ENCODE measurements at regions of chr17 and their contacts with region 1.

Region 1: GRCh38 chr17:31508288-31509094 is 117.0 kb downstream of the RAB11FIP4 start:
- DNase-seq: peak in 3 of 4 experiments; percentile 30 to 86 (median 69)
- ATAC-seq: peak; percentile 89
- H3K4me3 ChIP-seq: no peak overlapping the region
- H3K27ac ChIP-seq: peak overlapping the region; percentile 71
- H3K4me1 ChIP-seq: peaks cover 27 to 34% of the 10 kb centered on the region in 2 experiments
- H3K27me3 ChIP-seq: no peaks in the 10 kb centered on the region
- CTCF ChIP-seq: peak; percentile 52 to 65 (median 58)
- EP300 ChIP-seq: peak; percentile 33; the same call in 1 of the 2 replicates
- POLR2A ChIP-seq: no peak
- RAD21 ChIP-seq: peak in 1 of 2 experiments; percentile 48; a peak in 2 of 4 replicates

Region 2: GRCh38 chr17:30869005-30869404 is 639.5 kb before region 1 on chr17:
- CTCF ChIA-PET with region 1: no interaction called
- POLR2A ChIA-PET with region 1: no interaction called
- in situ Hi-C with region 1: no loop called
- intact Hi-C with region 1: no loop called
- DNase-seq: no peak
- ATAC-seq: no peak
- H3K4me3 ChIP-seq: no peak overlapping the region
- H3K27ac ChIP-seq: no peak overlapping the region
- H3K4me1 ChIP-seq: no peaks in the 10 kb centered on the region
- H3K27me3 ChIP-seq: no peaks in the 10 kb centered on the region
- CTCF ChIP-seq: no peak
- EP300 ChIP-seq: no peak
- POLR2A ChIP-seq: no peak
- RAD21 ChIP-seq: no peak

Region 3: DNA sequence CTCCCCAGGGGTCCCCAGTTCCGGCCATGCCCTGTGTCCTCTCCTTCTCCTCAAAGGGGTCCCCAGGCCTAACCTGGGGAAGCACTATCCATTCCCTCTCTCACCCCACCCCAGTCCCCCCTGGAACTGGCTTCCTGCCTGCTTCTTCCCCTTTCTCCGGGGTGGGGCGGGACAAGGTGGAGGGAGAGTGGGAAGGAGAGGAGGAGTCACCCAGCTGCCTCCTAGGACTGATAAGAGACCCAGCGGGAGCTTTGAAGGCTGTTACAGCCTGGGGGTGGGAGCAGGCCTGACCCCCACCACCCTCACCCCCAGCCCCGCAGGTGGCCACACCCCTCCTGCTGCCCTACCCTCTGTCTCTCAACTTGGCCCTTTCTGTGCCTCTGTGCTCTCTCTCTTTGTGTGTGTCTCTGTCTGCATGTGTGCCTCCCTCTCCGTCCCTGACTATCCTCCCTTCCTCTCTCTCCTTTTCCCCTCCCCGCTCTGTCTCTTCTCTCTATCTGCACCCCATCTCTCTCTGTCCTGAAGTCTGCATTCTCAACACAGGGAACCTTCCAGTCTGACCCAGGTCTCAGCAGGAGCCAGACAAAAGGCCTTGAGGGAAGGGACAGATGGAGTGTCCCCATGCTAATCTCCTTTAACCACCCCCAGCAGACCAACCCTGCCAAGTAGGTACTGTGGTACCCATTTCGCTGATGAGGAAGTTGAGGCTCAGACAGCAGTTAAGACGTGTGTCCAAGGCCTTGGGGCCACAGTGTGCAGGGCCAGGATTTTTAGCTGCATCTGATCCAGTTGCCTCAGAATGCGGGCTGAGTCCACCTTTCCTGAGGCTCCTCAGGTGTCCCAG is 50.9 kb before region 1 on chr17:
- CTCF ChIA-PET with region 1: no interaction called
- POLR2A ChIA-PET with region 1: no interaction called
- in situ Hi-C with region 1: no loop called
- intact Hi-C with region 1: loop called (anchors 5 kb)
- DNase-seq: peak; percentile 77 to 92 (median 88)
- ATAC-seq: peak; percentile 87
- H3K4me3 ChIP-seq: no peak overlapping the region
- H3K27ac ChIP-seq: peak overlapping the region; percentile 63
- H3K4me1 ChIP-seq: peaks cover 35 to 37% of the 10 kb centered on the region in 2 experiments
- H3K27me3 ChIP-seq: no peaks in the 10 kb centered on the region
- CTCF ChIP-seq: no peak
- EP300 ChIP-seq: no peak
- POLR2A ChIP-seq: no peak
- RAD21 ChIP-seq: no peak

Region 4: GRCh38 chr17:31570951-31571892 is 62.7 kb after region 1 on chr17:
- CTCF ChIA-PET with region 1: no interaction called
- POLR2A ChIA-PET with region 1: no interaction called
- in situ Hi-C with region 1: no loop called
- intact Hi-C with region 1: no loop called
- DNase-seq: no peak
- ATAC-seq: no peak
- H3K4me3 ChIP-seq: no peak overlapping the region
- H3K27ac ChIP-seq: no peak overlapping the region
- H3K4me1 ChIP-seq: no peaks in the 10 kb centered on the region; a peak in 1 of 5 replicates
- H3K27me3 ChIP-seq: peaks cover 47 to 79% of the 10 kb centered on the region in 2 experiments
- CTCF ChIP-seq: no peak
- EP300 ChIP-seq: no peak
- POLR2A ChIP-seq: no peak
- RAD21 ChIP-seq: no peak